Dorsolateral prefrontal cortex (tissue), 120 donors: ENCODE measurements at regions of chr18 and their contacts with region 1.

Region 1: DNA sequence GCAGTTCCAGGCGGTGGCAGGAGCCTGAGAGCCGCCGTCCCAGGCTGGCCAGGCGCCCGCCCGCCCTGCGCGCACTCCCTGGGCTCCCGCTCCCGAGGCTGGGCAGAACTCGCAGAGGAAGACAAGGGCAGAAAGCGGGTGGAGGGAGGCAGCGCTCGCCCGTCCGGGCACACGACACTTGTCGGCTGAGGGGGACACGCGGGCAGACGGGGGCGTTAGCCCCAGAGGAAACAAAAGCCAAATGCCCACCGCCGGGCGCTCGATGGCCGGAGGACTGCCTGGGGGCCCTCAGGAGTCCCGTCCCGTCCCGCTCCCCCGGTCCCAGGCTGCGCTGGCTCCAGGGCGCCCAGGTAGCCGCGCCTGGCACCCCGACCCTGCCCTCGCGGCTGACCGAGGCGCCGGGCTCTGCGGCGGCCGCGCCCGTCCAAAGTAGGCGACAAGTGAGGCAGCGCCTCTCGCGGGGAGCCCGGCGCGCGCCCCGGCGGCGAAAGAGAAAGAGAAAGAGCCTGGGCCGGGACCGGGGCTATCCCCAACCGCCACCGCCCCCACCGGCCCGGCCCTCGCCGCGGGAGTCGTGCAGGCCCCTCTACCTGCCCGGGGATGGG is 491 bp downstream of the L3MBTL4 start:
- DNase-seq: peak in 9 of 10 donors; percentile 35 to 80 (median 52)
- H3K4me3 ChIP-seq: peak overlapping the region; percentile 61 to 95 (median 80)
- H3K27ac ChIP-seq: peak overlapping the region; percentile 71 to 97 (median 92)
- H3K27me3 ChIP-seq: peaks cover 0 to 22% (median 0%) of the 10 kb centered on the region in 45 donors
- CTCF ChIP-seq: peak in 24 of 56 donors; percentile 5 to 52 (median 24)

Region 2: GRCh38 chr18:5890331-5891183 is 523.7 kb before region 1 on chr18:
- intact Hi-C with region 1: loop called in 1 of 2 experiments (anchors 5 kb)
- DNase-seq: peak in 6 of 10 donors; percentile 22 to 63 (median 43)
- H3K4me3 ChIP-seq: peak overlapping the region; percentile 39 to 77 (median 60)
- H3K27ac ChIP-seq: peak overlapping the region in 51 of 59 donors; percentile 17 to 87 (median 61)
- H3K27me3 ChIP-seq: peaks cover 0 to 43% (median 11%) of the 10 kb centered on the region in 45 donors
- CTCF ChIP-seq: peak in 47 of 56 donors; percentile 18 to 76 (median 50)

Region 3: DNA sequence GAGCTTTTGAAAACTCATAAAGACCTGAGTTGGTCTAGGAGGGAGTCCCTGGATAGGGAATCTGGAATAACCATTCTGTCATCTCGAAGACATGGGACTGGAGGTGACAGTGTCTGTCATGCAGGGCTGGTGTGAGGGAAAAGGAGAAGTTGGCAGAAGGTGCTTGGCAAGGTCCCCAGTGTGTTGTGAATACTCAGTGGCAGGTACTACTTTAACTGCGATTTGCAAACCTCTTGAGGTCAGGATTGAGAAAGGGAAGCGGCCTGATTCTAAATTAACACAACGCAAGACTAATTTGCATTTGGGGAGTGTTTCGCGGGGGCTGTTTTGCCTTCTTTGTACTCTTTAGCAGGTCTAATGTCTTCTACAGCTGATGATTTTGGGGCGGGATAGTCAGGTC is 441.9 kb before region 1 on chr18:
- intact Hi-C with region 1: loop called in 1 of 2 experiments (anchors 5 kb)
- DNase-seq: no peak
- H3K4me3 ChIP-seq: no peak overlapping the region
- H3K27ac ChIP-seq: peak overlapping the region in 1 of 59 donors; percentile 85
- H3K27me3 ChIP-seq: no peaks in the 10 kb centered on the region
- CTCF ChIP-seq: no peak

Region 4: DNA sequence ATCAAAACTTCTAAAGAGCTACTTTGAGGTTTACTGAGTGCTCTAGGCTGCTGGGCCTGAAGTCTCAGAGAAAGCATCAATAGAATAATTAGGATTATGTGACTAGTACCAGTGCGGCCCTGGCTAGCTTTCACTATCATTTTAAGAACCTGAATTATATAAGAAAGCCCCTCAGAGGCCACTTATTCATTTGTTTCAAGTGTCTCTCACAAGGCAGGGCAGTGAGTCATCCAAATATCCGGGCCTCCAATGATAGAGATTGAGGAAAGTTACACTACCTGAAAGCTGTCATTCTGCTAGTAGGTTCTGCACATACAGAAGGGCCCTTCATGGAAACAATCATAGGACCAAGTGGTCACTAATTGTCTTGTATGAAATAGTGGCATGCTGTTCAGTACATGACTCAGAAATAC is 192.6 kb before region 1 on chr18:
- intact Hi-C with region 1: loop called in 1 of 2 experiments (anchors 10 kb)
- DNase-seq: no peak
- H3K4me3 ChIP-seq: no peak overlapping the region
- H3K27ac ChIP-seq: peak overlapping the region in 3 of 59 donors; percentile 3 to 30 (median 26)
- H3K27me3 ChIP-seq: no peaks in the 10 kb centered on the region
- CTCF ChIP-seq: no peak

Region 5: DNA sequence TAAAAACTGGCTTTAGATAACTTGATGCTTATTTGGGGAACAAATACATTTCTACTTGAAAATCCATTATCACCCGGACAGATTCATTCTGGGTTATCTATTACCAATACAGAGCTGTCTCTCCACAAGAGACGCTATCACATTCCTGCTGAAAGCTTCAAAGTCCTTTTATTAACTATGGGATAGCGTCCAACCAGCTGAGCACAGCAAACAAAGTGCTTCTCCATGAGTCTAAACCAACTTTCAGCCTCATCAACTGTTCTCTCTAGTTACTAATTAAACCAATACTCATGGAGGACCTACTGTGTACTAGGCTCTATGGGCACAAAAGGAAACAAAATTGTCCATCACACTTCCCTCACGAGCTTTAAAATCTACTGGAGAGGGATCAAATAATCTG is 132.3 kb before region 1 on chr18:
- intact Hi-C with region 1: loop called in 1 of 2 experiments (anchors 10 kb)
- DNase-seq: no peak
- H3K4me3 ChIP-seq: no peak overlapping the region
- H3K27ac ChIP-seq: peak overlapping the region in 2 of 59 donors; percentile 1 to 43
- H3K27me3 ChIP-seq: no peaks in the 10 kb centered on the region
- CTCF ChIP-seq: peak in 23 of 56 donors; percentile 9 to 45 (median 26)

Region 6: GRCh38 chr18:6327895-6328620 is 86.2 kb before region 1 on chr18:
- intact Hi-C with region 1: no loop called
- DNase-seq: no peak
- H3K4me3 ChIP-seq: no peak overlapping the region
- H3K27ac ChIP-seq: no peak overlapping the region
- H3K27me3 ChIP-seq: no peaks in the 10 kb centered on the region
- CTCF ChIP-seq: no peak

Region 7: GRCh38 chr18:6487968-6488367 is 73.7 kb after region 1 on chr18:
- intact Hi-C with region 1: loop called in 1 of 2 experiments (anchors 5 kb)
- DNase-seq: no peak
- H3K4me3 ChIP-seq: no peak overlapping the region
- H3K27ac ChIP-seq: no peak overlapping the region
- H3K27me3 ChIP-seq: peaks cover 0 to 3% (median 0%) of the 10 kb centered on the region in 45 donors
- CTCF ChIP-seq: no peak